ENCODE measurements at regions of chr1 and their contacts with region 1.

Region 1: GRCh38 chr1:88736639-88737248 is 52.7 kb downstream of the PKN2 start:
- DNase-seq: peak; percentile 65
- ATAC-seq: peak; percentile 65
- H3K4me3 ChIP-seq: no peak overlapping the region
- H3K27ac ChIP-seq: no peak overlapping the region
- H3K4me1 ChIP-seq: peaks cover 19% of the 10 kb centered on the region
- H3K27me3 ChIP-seq: no peaks in the 10 kb centered on the region
- CTCF ChIP-seq: peak; percentile 82

Region 2: GRCh38 chr1:88802950-88803349 is 66.2 kb after region 1 on chr1:
- CTCF ChIA-PET with region 1: no interaction called
- POLR2A ChIA-PET with region 1: no interaction called
- intact Hi-C with region 1: loop called (anchors 1 kb)
- DNase-seq: peak; percentile 51
- ATAC-seq: peak; percentile 80
- H3K4me3 ChIP-seq: no peak overlapping the region
- H3K27ac ChIP-seq: no peak overlapping the region
- H3K4me1 ChIP-seq: peaks cover 9% of the 10 kb centered on the region
- H3K27me3 ChIP-seq: no peaks in the 10 kb centered on the region
- CTCF ChIP-seq: no peak

Region 3: DNA sequence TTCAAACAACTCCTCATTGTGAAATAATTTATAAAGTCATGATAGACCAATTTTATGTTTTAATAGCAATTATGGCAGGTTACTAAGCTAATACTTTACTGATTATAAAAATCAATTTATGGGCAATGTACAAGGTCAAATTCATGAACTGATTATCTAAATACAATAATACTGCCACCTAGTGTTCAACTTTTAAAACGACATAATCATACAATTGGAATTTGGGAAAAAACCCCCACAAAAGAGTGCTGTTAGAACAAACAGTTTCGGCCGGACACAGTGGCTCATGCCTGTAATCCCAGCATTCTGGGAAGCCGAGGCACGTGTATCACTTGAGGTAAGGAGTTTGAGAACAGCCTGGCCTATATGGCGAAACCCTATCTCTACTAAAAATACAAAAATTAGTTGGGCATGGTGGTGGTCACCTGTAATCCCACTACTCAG is 140.7 kb after region 1 on chr1:
- CTCF ChIA-PET with region 1: interaction called, 3 read pairs
- POLR2A ChIA-PET with region 1: no interaction called
- intact Hi-C with region 1: loop called (anchors 1 kb)
- DNase-seq: peak; percentile 62
- ATAC-seq: peak; percentile 48
- H3K4me3 ChIP-seq: no peak overlapping the region
- H3K27ac ChIP-seq: no peak overlapping the region
- H3K4me1 ChIP-seq: peaks cover 8% of the 10 kb centered on the region; the same call in 1 of the 2 replicates
- H3K27me3 ChIP-seq: no peaks in the 10 kb centered on the region
- CTCF ChIP-seq: peak; percentile 70

Region 4: GRCh38 chr1:88983791-88984559 is 247.2 kb after region 1 on chr1:
- CTCF ChIA-PET with region 1: no interaction called
- POLR2A ChIA-PET with region 1: no interaction called
- intact Hi-C with region 1: loop called (anchors 5 kb)
- DNase-seq: peak; percentile 84
- ATAC-seq: 0 out of 2 replicates have a peak, but pooled peaks have one; percentile 5
- H3K4me3 ChIP-seq: peak overlapping the region; percentile 25; the same call in 1 of the 2 replicates
- H3K27ac ChIP-seq: peak overlapping the region; percentile 86; the same call in 1 of the 2 replicates
- H3K4me1 ChIP-seq: peaks cover 48% of the 10 kb centered on the region
- H3K27me3 ChIP-seq: no peaks in the 10 kb centered on the region
- CTCF ChIP-seq: peak; percentile 69

Measured in PC-3 (cell line).